Activated CD8-positive, alpha-beta T cell treated with anti-CD3 and anti-CD28 coated beads, Interleukin-2, amount 10 ng/mL, durations not matched to agents 7 days and 5 days (primary cell): ENCODE measurements at regions of chr9 and their contacts with region 1.

Region 1: GRCh38 chr9:125558453-125559092 is 148.4 kb downstream of the MAPKAP1 start:
- DNase-seq: peak; percentile 71
- ATAC-seq: peak; percentile 71
- H3K4me3 Mint-ChIP-seq: no peak overlapping the region
- H3K27ac Mint-ChIP-seq: no peak overlapping the region
- H3K4me1 Mint-ChIP-seq: peaks cover 21% of the 10 kb centered on the region
- H3K27me3 Mint-ChIP-seq: no peaks in the 10 kb centered on the region

Region 2: DNA sequence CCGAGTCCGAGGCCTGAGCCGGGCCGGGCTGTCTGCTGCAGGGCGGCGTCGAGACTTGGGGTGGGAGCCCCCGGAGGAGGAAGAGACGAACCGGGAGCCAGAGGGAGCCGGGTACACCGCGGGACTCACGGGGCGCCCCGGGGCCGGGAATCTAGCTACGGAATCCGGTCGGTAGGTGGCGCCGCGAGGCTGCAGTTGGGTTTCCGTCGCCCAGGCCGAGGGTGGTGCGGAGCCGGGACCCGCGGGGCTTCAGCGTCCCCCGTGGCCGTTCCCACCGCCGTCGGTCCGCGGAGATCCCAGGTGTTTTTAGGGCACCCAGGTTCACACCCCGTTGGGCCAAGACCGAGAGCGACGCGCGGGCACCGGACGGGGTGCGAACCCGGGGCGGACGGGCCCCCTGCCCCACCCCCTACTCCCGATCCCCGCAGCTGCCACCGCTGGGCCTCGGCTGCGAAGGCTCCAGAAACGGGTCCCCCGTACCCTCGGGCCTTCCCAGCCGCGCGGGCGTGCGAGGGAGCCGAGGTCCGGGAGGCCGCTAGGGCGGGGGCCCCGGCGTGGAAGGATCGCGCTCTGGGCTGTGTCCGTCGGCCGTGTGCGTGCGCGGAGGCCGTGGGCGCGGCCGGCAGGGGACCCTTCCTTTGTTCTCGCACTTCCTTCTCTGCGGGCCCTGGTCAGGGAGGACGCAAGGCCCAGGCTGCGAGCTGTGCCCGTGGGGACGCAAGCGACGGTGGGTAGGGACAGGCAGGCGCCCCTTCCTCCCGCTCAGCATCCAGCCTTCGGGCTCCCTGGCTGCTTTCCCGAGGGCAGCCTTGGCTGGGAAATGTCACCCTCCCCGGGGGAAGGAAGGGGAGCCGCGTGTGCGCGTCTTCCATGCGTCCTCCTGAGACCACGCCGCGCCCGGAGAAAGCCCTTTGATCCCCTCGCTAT is 150.3 kb before region 1 on chr9:
- CTCF ChIA-PET with region 1: interaction called, 12 read pairs
- POLR2A ChIA-PET with region 1: no interaction called
- DNase-seq: peak; percentile 82
- ATAC-seq: peak; percentile 92
- H3K4me3 Mint-ChIP-seq: peak overlapping the region; percentile 65
- H3K27ac Mint-ChIP-seq: no peak overlapping the region
- H3K4me1 Mint-ChIP-seq: peaks cover 16% of the 10 kb centered on the region
- H3K27me3 Mint-ChIP-seq: peaks cover 14% of the 10 kb centered on the region

Region 3: DNA sequence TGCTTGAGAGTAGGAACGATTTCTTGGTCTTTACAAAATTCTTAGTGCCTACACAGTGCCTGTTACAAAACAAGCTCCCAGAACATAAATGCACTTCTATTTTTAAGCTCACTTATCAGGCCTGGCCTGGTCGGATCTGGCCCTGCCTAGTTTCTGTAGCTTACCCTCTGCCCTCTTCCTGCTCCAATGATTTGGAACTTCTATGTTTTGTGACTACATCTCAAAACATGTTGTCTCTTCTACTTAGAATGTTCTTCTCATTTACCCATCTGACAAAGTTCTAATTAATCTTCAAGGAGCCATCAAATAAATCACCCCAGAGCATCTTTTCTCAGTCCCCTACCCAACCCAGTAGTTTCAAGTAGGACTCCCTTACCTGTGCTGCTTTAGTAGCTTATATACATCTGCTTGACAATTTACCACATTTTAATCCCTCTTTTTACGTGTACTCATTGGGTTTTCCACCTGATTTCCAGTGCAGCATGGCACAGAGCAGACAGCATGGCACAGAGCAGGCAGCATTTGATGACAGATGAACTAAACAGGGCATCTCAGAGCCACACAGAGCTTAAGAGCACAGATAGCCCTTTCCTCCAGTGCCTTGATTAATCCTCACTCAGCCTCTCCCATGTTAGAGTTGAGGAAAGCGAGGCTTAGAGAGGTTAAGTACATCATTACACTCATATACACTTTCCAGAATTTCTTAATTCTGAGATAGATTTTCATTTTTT is 23.4 kb before region 1 on chr9:
- CTCF ChIA-PET with region 1: interaction called, 15 read pairs
- POLR2A ChIA-PET with region 1: no interaction called
- DNase-seq: no peak
- ATAC-seq: no peak
- H3K4me3 Mint-ChIP-seq: no peak overlapping the region
- H3K27ac Mint-ChIP-seq: no peak overlapping the region
- H3K4me1 Mint-ChIP-seq: peaks cover 7% of the 10 kb centered on the region
- H3K27me3 Mint-ChIP-seq: no peaks in the 10 kb centered on the region

Region 4: DNA sequence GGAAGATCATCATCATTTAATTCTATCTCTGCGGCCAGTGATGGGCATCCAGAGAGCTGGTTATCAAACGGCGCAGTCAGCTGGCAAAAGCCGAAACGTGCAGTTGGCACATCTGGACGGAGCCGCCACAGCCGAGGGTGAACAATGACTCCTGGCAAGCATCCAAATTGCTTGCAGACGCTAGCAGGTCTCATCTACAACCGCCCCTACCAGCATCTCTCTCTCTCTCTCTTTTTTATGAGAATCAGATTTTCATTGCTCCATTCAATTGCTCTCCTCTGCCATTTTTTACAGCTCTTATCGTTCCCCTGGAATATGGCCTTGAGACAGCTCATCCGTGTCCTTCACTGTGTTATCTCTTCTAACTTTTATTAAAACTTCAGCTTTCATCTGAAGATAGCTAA is 16.7 kb before region 1 on chr9:
- CTCF ChIA-PET with region 1: interaction called, 11 read pairs
- POLR2A ChIA-PET with region 1: no interaction called
- DNase-seq: no peak
- ATAC-seq: no peak
- H3K4me3 Mint-ChIP-seq: no peak overlapping the region
- H3K27ac Mint-ChIP-seq: no peak overlapping the region
- H3K4me1 Mint-ChIP-seq: no peaks in the 10 kb centered on the region
- H3K27me3 Mint-ChIP-seq: no peaks in the 10 kb centered on the region

Region 5: DNA sequence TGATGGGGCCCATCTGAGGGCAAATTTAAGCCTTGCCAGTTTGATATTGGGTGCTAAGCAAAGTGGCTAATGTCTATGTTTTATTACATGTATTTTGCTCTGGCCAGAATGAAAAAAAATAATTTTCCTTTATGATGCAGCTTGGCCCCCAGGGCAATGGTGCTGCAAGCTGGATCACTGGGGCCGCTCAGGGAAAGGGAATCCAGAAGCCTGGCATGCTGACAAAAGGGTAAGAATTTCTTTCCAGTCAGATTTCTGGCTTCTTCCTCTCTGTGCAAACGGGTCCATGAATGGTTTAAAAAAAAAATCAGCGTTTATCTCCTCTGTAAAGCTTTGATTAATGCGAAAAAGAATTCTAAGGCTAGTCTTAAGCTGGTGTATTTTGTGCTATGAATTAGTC is 10.0 kb after region 1 on chr9:
- CTCF ChIA-PET with region 1: interaction called, 12 read pairs
- POLR2A ChIA-PET with region 1: no interaction called
- DNase-seq: no peak
- ATAC-seq: no peak
- H3K4me3 Mint-ChIP-seq: no peak overlapping the region
- H3K27ac Mint-ChIP-seq: no peak overlapping the region
- H3K4me1 Mint-ChIP-seq: no peaks in the 10 kb centered on the region
- H3K27me3 Mint-ChIP-seq: no peaks in the 10 kb centered on the region

Region 6: DNA sequence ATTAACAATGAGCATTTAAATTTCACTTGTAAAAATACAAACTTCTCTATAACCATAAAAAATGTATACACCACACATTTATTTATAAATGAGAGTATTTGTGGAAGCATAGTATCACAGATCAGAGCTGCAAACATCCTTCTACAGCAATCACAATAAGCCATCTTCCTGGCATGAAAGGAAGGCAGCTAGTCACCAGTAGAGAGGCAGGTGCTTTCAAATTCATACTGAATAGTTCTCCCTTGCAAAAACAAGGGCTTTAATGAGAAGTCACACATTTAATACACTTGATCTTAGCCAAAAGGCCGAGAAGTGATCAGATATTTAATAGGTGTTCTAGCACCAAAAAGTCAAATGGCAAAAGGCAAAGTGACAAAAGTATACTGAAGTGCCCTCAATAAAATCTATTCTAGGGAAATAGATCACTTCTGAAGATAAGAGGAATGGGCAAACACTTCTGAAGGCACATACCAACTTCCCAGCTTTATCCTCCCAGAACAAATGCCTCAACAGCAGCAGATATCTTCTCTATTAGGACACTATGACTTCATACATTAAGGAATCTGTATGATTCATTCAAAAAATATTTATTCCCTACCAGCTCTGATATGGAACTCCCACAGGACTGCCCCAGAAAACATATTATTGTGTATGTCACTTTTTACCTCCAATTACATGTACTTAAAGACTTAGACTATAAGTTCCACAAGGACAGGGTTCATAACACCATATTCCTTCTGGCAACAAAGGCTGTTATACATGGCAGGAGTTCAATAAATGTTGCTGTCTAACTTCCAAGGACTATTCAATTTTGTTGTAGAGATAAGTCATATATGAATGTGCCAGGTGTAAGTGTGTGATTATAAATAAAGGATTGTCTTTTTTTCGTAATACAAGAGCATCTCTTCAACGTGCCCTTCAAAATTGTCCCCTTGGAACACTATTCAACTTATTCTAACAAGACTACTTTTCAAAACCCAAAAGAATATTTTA is 116.7 kb after region 1 on chr9:
- CTCF ChIA-PET with region 1: no interaction called
- POLR2A ChIA-PET with region 1: no interaction called
- DNase-seq: no peak
- ATAC-seq: no peak
- H3K4me3 Mint-ChIP-seq: no peak overlapping the region
- H3K27ac Mint-ChIP-seq: no peak overlapping the region
- H3K4me1 Mint-ChIP-seq: no peaks in the 10 kb centered on the region
- H3K27me3 Mint-ChIP-seq: no peaks in the 10 kb centered on the region

Region 7: DNA sequence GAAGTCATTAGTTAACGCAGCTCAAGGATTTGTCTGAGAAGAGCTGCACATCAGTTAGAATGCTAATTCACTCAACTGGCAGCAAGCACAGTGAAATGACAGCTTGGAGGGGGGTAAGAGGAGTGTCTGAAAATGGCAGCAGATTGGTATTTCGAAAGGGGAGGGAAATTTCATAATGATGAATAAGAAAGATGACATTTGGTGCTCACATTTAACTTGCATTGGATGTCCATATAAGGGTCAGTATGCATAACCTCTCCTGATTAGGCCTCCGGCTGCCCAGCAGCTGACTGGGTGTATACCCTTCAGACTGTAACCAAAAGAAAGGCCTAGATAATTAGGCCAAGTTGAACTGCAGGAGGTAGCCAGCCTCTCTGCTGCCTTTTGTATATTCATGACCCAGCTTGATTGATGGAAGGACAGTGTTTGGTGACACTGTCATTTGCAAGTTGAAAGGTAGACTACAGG is 319.6 kb after region 1 on chr9:
- CTCF ChIA-PET with region 1: no interaction called
- POLR2A ChIA-PET with region 1: no interaction called
- DNase-seq: no peak
- ATAC-seq: no peak
- H3K4me3 Mint-ChIP-seq: no peak overlapping the region
- H3K27ac Mint-ChIP-seq: no peak overlapping the region
- H3K4me1 Mint-ChIP-seq: no peaks in the 10 kb centered on the region
- H3K27me3 Mint-ChIP-seq: no peaks in the 10 kb centered on the region

Region 8: DNA sequence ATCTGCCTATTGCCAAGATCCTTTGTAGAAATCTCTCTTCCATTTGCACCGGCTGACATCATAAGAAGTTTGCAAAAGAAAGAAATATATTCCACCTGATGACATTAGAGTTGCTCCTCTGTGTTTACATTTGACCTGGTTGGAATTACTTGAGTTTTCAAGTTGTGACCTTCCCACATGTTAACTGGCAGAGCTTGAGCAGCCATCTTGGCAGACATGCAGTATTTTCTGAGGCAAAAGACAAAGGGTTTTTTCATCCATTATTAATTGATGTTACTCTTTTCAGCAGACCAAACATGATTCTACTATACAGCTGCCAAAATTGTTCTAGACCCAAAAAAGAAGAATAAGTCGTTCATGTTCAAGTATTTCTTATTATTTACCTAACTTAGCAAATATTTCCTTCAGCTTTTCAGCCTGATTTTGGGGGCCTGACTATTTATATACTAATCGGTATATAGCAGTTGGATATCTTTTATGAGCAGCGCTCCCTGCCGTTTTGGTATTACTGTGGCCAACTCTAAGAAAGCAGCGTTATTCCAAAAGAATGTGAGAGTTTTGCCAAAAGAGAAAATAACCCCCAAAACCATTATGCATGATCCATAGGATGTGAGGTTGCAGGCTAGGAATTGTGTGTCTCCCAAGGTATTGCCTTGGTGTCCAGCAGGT is 401.5 kb after region 1 on chr9:
- CTCF ChIA-PET with region 1: no interaction called
- POLR2A ChIA-PET with region 1: no interaction called
- DNase-seq: no peak
- ATAC-seq: no peak
- H3K4me3 Mint-ChIP-seq: no peak overlapping the region
- H3K27ac Mint-ChIP-seq: no peak overlapping the region
- H3K4me1 Mint-ChIP-seq: no peaks in the 10 kb centered on the region
- H3K27me3 Mint-ChIP-seq: no peaks in the 10 kb centered on the region